Gastrocnemius medialis (tissue), 4 donors: ENCODE measurements at regions of chr18 and their contacts with region 1.

Region 1: GRCh38 chr18:5510135-5510846 is 33.5 kb downstream of the EPB41L3 start:
- DNase-seq: no peak
- ATAC-seq: peak in 1 of 2 donors; percentile 50
- H3K4me3 ChIP-seq: no peak overlapping the region
- H3K27ac ChIP-seq: no peak overlapping the region
- H3K4me1 ChIP-seq: peaks cover 0 to 9% of the 10 kb centered on the region in 2 donors
- H3K27me3 ChIP-seq: no peaks in the 10 kb centered on the region
- CTCF ChIP-seq: no peak
- POLR2A ChIP-seq: no peak

Region 2: DNA sequence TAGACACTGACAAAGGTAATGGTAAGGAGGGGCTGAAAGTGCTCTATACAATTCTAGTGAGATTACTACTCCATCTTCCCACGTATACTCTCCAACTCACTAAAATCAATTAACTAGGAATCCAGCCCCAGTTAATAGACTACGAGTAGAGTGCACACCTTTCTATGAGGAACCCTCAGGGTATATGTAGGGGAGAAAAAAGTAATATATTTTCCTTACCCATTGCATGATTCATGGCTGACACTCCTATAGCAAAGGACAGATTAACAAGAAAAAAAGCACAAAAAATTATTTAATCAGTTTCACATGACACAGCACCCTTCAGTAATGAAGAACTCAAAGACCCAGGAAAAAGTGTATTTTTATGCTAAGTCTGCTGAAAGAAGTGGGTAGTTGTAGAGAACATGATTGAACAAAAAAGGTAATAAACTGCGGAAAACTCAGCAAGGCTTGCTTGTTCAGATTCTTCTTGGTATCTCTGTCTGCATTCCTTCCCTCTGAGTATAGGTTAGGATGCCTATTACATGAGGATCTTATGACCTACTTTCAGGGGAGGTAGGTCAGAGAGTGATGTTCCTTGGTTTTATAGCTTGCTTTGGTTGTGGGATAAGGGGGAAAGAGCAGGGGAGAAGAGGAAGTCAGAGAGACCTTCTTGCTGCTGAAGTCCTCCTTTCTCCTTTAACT is 713.1 kb before region 1 on chr18:
- in situ Hi-C with region 1: no loop called
- intact Hi-C with region 1: no loop called
- DNase-seq: no peak
- ATAC-seq: no peak
- H3K4me3 ChIP-seq: no peak overlapping the region
- H3K27ac ChIP-seq: no peak overlapping the region
- H3K4me1 ChIP-seq: no peaks in the 10 kb centered on the region
- H3K27me3 ChIP-seq: no peaks in the 10 kb centered on the region
- CTCF ChIP-seq: no peak
- POLR2A ChIP-seq: no peak

Region 3: GRCh38 chr18:5439986-5440696 is 70.2 kb before region 1 on chr18:
- in situ Hi-C with region 1: no loop called
- intact Hi-C with region 1: no loop called
- DNase-seq: no peak
- ATAC-seq: no peak
- H3K4me3 ChIP-seq: no peak overlapping the region
- H3K27ac ChIP-seq: no peak overlapping the region
- H3K4me1 ChIP-seq: no peaks in the 10 kb centered on the region
- H3K27me3 ChIP-seq: no peaks in the 10 kb centered on the region
- CTCF ChIP-seq: no peak
- POLR2A ChIP-seq: no peak

Region 4: GRCh38 chr18:5463379-5463778 is 46.9 kb before region 1 on chr18:
- in situ Hi-C with region 1: no loop called
- intact Hi-C with region 1: loop called (anchors 5 kb)
- DNase-seq: peak; percentile 53 to 74
- ATAC-seq: peak; percentile 83 to 90
- H3K4me3 ChIP-seq: no peak overlapping the region
- H3K27ac ChIP-seq: peak overlapping the region in 1 of 4 donors; percentile 3
- H3K4me1 ChIP-seq: no peaks in the 10 kb centered on the region
- H3K27me3 ChIP-seq: no peaks in the 10 kb centered on the region
- CTCF ChIP-seq: no peak
- POLR2A ChIP-seq: no peak